Activated CD8-positive, alpha-beta T cell treated with anti-CD3 and anti-CD28 coated beads, Interleukin-2, amount 10 ng/mL, durations not matched to agents 7 days and 5 days (primary cell): ENCODE measurements at regions of chr22 and their contacts with region 1.

Region 1: DNA sequence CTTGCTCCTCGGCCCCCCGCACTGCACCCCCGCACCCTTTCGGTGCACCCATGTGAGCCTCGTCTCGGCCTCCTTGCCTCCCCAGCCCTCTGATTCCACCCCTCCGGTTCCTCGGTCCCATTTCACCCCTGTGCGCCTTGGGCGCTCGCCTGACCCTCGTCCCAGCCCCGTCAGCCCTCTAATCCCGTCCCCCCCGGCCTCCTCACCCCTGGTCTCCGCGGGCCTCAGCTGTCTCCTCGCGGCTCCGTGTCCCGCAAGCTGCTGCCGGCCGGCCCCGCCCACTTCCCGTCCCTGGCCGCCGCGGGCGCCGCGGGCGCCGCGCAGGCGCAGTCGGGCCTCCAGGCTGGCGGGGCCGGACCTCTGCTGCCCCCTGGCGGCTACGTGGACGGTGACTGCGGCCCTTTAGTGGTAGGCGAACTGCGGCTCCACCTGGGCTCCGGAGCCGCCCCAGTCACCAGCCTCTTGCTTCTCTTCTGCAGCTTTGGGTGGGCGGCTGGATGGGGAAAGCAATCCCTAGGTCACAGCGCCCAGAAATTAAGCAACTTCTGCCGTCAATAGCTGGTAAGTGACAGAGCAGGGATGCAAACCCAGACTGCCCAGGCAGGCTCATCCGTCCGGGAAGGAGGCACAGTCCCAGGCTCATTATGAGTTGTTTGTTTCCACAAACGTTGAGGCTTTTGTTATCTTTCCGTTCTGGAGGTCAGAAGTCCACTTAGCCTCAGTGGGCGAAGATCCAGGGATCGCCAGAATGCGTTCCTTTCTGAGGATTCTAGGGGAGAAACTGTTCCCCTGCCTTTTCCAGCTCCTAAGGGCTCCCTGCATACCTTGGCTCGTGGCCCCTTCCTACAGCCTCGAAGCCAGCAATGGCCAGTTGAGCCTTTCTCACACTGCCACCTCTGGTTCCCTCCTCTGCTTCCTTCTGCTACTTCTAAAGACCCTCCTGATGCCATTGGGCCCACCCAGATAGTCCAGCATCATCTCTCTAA is at the start of gene PPM1F:
- DNase-seq: peak; percentile 91
- ATAC-seq: peak; percentile 90
- H3K4me3 Mint-ChIP-seq: peak within 1 kb of the TSS; percentile 85
- H3K27ac Mint-ChIP-seq: peak within 1 kb of the TSS; percentile 83
- H3K4me1 Mint-ChIP-seq: peaks cover 13% of the 10 kb centered on the region
- H3K27me3 Mint-ChIP-seq: no peaks in the 10 kb centered on the region
- total RNA-seq, gene PPM1F: 15.3 to 15.7 TPM

Region 2: GRCh38 chr22:21754523-21754922 is 198.4 kb before region 1 on chr22:
- CTCF ChIA-PET with region 1: no interaction called
- POLR2A ChIA-PET with region 1: no interaction called
- DNase-seq: no peak
- ATAC-seq: no peak
- H3K4me3 Mint-ChIP-seq: no peak overlapping the region
- H3K27ac Mint-ChIP-seq: no peak overlapping the region
- H3K4me1 Mint-ChIP-seq: no peaks in the 10 kb centered on the region
- H3K27me3 Mint-ChIP-seq: no peaks in the 10 kb centered on the region

Region 3: GRCh38 chr22:21768435-21768834 is 184.4 kb before region 1 on chr22:
- CTCF ChIA-PET with region 1: no interaction called
- POLR2A ChIA-PET with region 1: no interaction called
- DNase-seq: no peak
- ATAC-seq: no peak
- H3K4me3 Mint-ChIP-seq: peak overlapping the region; percentile 29
- H3K27ac Mint-ChIP-seq: peak overlapping the region; percentile 85
- H3K4me1 Mint-ChIP-seq: peaks cover 68% of the 10 kb centered on the region
- H3K27me3 Mint-ChIP-seq: no peaks in the 10 kb centered on the region

Region 4: GRCh38 chr22:21938071-21938822 is 14.6 kb before region 1 on chr22:
- CTCF ChIA-PET with region 1: interaction called, 138 read pairs
- POLR2A ChIA-PET with region 1: interaction called, 6 read pairs
- DNase-seq: peak; percentile 93
- ATAC-seq: peak; percentile 99
- H3K4me3 Mint-ChIP-seq: peak overlapping the region; percentile 73
- H3K27ac Mint-ChIP-seq: peak overlapping the region; percentile 84
- H3K4me1 Mint-ChIP-seq: peaks cover 59% of the 10 kb centered on the region
- H3K27me3 Mint-ChIP-seq: no peaks in the 10 kb centered on the region

Region 5: DNA sequence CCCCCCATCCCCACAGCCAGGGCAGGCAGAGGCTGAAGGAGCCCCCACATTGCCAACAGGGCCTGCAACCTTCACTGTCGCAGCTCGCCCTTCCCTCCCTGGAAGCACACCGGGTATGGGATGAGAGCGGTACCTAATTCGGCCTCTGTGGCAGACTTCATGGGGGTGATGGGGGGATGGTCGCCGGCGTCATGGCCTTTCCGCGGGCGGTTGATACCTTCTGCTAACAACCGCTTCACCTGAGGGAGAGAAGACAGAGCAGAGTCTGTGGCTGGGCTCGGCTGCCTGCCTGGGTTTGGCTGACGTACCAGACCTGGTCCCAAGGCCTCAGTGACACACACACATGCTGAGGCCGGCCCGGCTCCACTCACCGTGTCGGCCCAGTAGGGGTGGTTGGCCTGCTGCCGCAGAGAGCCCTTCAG is 10.9 kb after region 1 on chr22:
- CTCF ChIA-PET with region 1: interaction called, 16 read pairs
- POLR2A ChIA-PET with region 1: interaction called, 3 read pairs
- DNase-seq: no peak
- ATAC-seq: no peak
- H3K4me3 Mint-ChIP-seq: no peak overlapping the region
- H3K27ac Mint-ChIP-seq: no peak overlapping the region
- H3K4me1 Mint-ChIP-seq: no peaks in the 10 kb centered on the region
- H3K27me3 Mint-ChIP-seq: no peaks in the 10 kb centered on the region

Region 6: DNA sequence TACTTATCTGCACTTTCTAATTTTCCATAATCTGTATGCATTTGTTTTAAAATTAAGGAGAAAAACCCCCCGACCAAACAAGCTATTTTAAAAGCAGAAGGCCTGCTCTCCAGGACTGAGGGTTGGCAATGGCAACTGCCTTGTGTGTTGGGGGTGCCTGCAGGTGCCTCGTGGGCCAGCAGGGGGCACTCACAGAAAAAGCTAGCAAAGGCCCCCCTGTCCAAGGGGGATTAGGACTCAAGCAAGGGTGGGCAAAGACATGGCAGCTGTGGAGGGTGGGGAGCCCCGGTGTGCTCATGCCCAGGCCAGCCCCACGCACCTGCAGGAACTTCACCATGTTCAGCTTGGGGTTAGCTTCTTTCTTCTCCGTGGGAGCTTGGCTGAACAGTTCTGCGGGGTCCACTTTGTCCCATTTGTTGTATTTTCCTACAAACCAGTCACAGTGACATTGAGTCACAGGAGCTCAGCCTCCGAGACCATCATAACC is 19.5 kb after region 1 on chr22:
- CTCF ChIA-PET with region 1: interaction called, 18 read pairs
- POLR2A ChIA-PET with region 1: interaction called, 3 read pairs
- DNase-seq: peak; percentile 68
- ATAC-seq: peak; percentile 80
- H3K4me3 Mint-ChIP-seq: no peak overlapping the region
- H3K27ac Mint-ChIP-seq: no peak overlapping the region
- H3K4me1 Mint-ChIP-seq: no peaks in the 10 kb centered on the region
- H3K27me3 Mint-ChIP-seq: no peaks in the 10 kb centered on the region

Region 7: GRCh38 chr22:21982338-21982965 is 29.6 kb after region 1 on chr22 and contains the start of gene TOP3B:
- CTCF ChIA-PET with region 1: interaction called, 10 read pairs
- POLR2A ChIA-PET with region 1: no interaction called
- DNase-seq: peak; percentile 85
- ATAC-seq: peak; percentile 97
- H3K4me3 Mint-ChIP-seq: peak within 1 kb of the TSS; percentile 91
- H3K27ac Mint-ChIP-seq: peak within 1 kb of the TSS; percentile 87
- H3K4me1 Mint-ChIP-seq: peaks cover 28% of the 10 kb centered on the region
- H3K27me3 Mint-ChIP-seq: no peaks in the 10 kb centered on the region
- total RNA-seq, gene TOP3B: 47.3 to 49.9 TPM